Activated CD4-positive, alpha-beta memory T cell treated with anti-CD3 and anti-CD28 coated beads, Interleukin-2, amount 10 ng/mL, durations not matched to agents 7 days and 5 days (primary cell): ENCODE measurements at regions of chr9 and their contacts with region 1.

Region 1: DNA sequence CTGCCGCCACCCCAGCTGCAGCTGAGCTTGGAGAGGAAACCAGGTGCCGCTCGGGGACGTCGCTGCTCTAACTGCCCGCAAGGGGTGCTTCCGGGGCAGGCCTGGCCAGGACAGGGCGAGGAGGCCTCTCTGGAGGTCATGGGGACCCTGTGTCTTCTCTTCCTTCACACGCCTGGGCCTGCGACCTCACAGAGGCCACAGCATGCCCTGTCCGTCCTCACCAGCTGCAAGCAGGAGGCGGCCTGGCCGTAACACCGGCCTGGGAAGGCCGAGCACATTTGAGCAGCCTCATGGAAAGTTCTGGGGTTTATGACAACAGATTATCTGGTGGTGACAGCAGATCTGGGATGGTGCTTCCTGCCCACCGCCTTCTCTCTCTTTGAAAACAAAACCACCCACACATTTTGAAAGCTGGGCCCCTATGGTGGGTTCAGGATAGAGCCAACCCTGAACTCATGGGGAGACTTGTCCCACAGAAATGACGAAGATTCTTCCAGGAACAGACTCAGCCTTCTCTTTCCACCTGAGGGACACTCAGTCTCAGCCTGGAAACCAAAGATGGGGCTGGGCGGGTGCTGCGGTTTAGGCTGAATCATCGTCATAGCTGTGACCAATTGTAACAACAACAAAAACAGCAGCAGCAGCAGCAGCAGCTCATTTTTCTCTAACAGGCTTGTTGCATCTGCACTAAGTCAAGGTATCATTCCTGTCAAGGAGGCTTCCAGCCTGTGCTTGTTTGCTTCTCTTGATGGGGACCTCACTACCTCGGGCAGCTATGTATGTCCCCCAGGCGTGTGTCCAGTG is 99.6 kb upstream of the RAPGEF1 start:
- DNase-seq: peak; percentile 86
- H3K4me3 Mint-ChIP-seq: peak overlapping the region; percentile 51
- H3K27ac Mint-ChIP-seq: peak overlapping the region; percentile 99
- H3K4me1 Mint-ChIP-seq: peaks cover 37% of the 10 kb centered on the region
- H3K27me3 Mint-ChIP-seq: peaks cover 6% of the 10 kb centered on the region

Region 2: DNA sequence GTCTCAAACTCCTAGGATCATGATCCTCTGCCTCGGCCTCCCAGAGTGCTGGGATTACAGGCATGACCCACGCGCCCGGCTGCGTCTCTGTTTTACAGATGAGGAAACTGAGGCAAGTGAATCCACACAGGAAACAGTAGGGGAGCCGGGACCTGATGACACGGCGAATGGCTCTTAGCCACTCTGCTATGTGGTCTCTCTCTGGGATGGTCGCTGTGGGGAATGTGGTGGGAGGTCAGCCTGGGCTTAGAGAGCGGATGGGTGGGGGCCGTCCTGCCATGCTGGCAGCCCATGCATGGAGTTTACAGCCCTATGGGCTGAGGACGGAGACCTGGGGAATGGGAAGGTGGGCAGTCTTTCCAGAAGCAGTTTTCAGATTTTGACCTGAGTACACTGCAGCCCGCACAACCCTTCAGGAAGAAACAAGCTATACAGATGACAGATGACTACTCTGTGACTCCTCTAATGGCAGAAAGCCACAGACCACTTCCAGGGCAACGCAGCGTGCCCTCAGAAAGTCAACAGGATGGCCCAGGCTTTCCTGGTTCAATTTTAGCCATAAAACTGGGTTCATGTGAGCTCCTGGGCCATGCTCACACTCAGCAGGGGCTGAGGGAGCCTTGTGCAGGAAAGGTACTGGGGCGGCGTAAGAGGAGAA is 36.5 kb after region 1 on chr9:
- CTCF ChIA-PET with region 1: interaction called, 5 read pairs
- POLR2A ChIA-PET with region 1: interaction called, 11 read pairs
- DNase-seq: peak; percentile 67
- H3K4me3 Mint-ChIP-seq: no peak overlapping the region
- H3K27ac Mint-ChIP-seq: peak overlapping the region; percentile 82
- H3K4me1 Mint-ChIP-seq: peaks cover 38% of the 10 kb centered on the region
- H3K27me3 Mint-ChIP-seq: no peaks in the 10 kb centered on the region

Region 3: DNA sequence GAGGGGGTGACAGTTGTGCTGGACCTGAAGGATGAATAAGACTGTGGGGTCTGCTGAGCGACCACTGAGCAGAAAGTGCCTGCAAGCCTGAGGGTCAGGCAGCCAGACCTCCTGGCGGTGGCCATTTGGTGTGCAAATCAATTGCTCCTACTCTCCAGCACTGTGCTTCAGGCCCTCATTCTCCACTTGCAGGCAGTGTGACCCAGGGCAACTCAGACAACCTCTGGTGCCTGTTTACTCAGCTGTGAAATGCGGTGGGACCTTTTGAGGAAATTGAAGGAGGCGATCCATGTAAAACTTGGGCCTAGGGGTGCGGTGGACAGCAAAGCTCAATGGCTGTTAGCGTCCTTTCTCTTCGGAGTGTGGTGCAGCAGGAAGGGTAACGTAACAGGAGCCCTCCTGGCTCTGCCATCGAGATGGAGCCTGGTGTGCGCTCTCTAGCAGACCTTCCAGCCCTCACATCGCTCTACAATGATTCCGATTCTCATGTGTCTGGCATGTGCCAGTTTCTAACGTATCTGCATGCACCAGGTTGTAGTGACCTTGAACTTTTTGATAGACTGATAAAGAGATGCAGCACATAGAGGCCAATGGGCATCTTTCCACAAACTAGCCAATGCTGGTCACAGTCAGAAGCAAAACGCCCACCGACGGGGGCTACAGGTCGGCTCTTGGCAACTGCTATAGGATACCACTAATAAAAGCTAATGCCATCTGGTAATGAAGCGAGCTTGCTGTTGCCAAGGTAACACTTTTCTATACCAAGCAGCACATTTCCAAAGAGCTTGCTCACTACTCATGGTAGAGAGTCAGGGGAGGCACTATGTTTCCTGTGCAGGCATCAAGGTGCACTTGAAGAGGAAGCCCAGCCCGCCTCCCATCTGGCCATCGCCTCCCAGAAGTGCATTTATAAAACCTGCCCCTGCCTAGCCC is 60.1 kb after region 1 on chr9:
- CTCF ChIA-PET with region 1: no interaction called
- POLR2A ChIA-PET with region 1: no interaction called
- DNase-seq: no peak
- H3K4me3 Mint-ChIP-seq: no peak overlapping the region
- H3K27ac Mint-ChIP-seq: no peak overlapping the region
- H3K4me1 Mint-ChIP-seq: no peaks in the 10 kb centered on the region
- H3K27me3 Mint-ChIP-seq: no peaks in the 10 kb centered on the region